Breast epithelium (tissue), 4 donors: ENCODE measurements at regions of chr19 and their contacts with region 1.

Region 1: DNA sequence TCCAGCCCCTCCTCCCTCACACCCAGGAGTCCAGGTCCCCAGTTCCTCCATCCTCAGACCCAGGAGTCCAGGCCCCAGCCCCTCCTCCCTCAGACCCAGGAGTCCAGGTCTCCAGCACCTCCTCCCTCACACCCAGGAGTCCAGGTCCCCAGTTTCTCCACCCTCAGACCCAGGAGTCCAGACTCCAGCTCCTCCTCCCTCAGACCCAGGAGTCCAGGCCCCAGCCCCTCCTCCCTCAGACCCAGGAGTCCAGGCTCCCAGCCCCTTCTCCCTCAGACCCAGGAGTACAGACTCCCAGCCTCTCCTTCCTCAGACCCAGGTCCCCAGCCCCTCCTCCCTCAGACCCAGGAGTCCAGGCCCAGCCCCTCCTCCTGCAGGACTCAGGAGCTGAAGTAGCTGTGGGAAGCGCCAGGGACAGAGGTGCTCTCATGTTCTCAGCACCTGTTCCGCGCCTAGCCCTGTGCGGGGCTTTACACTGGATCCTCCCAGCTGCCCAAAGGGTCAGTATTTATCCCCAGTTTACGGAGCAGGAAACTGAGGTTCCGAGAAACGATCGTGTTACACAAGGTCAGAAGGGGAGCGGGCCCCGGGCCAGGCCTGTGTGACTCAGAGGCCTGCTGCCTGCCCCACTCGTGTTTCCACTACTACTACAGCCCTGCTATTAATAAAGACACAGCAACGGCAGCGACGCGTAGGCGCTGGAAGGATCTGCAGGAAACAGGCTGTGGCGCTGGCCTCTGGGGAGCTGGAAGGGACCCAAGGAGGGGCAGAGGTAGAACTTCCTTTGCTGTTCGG is 1.7 kb upstream of the SBK3 start:
- DNase-seq: peak in 1 of 2 donors; percentile 69
- H3K4me3 ChIP-seq: peak overlapping the region in 1 of 3 donors; percentile 49
- H3K27ac ChIP-seq: peak overlapping the region; percentile 83 to 91
- H3K4me1 ChIP-seq: peaks cover 0 to 6% of the 10 kb centered on the region in 2 donors
- H3K27me3 ChIP-seq: no peaks in the 10 kb centered on the region
- CTCF ChIP-seq: no peak
- POLR2A ChIP-seq: no peak

Region 2: GRCh38 chr19:55494172-55494761 is 52.8 kb before region 1 on chr19:
- intact Hi-C with region 1: no loop called
- DNase-seq: no peak
- H3K4me3 ChIP-seq: peak overlapping the region; percentile 35 to 62 (median 52)
- H3K27ac ChIP-seq: peak overlapping the region; percentile 78 to 95
- H3K4me1 ChIP-seq: peaks cover 0 to 6% of the 10 kb centered on the region in 2 donors
- H3K27me3 ChIP-seq: peaks cover 0 to 11% of the 10 kb centered on the region in 2 donors
- CTCF ChIP-seq: no peak
- POLR2A ChIP-seq: no peak

Region 3: GRCh38 chr19:55586976-55587668 is 40.1 kb after region 1 on chr19:
- intact Hi-C with region 1: loop called (anchors 1 kb)
- DNase-seq: peak; percentile 95 to 98
- H3K4me3 ChIP-seq: peak overlapping the region; percentile 6 to 62 (median 52)
- H3K27ac ChIP-seq: peak overlapping the region; percentile 58 to 71
- H3K4me1 ChIP-seq: no peaks in the 10 kb centered on the region
- H3K27me3 ChIP-seq: no peaks in the 10 kb centered on the region
- CTCF ChIP-seq: no peak
- POLR2A ChIP-seq: no peak